Activated naive CD4-positive, alpha-beta T cell treated with anti-CD3 and anti-CD28 coated beads for 36 hours (primary cell): ENCODE measurements at regions of chr7 and their contacts with region 1.

Region 1: DNA sequence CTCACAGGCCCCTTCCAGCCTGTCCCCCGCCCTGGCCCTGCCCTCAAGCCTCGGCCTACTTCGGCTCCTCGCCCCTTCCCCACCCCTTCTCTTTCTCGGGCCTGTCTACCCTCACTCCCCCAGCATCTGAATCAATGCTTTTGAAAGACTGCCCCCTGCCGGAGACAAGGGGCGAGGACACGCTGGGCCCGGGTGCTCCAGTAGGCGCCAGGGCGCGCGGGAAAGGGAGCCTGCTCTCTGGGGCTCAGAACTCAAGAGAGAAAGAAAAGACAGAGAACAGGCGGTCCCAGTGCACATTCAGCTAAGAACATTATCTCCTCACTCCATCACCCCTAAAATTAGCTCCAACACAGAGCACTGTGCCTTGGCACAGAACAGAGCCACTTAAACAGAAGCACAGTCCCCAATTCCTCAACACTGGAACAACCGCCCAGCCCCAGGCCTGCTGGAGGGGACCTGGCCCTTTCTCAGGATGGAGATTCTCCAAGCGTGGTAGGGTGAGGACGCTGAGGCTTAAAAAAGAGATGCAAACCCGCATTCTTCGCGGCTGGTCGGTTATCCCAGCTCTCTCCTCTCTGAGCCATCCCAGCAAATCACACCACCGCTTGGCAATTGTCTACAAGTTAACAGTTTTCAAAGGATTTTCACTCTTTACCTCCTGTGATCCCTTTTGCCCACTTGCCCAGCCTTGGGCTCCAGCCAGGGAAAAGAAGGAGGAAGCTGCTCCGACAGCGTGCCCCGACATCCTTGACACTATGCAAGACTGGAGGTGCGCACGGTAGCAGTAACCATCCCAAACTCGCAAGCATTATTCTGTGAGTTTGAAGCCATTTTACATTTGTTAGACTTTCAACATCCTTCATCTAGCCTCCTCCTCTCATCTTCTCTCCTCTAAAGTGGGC is 2.1 kb downstream of the GIGYF1 start:
- DNase-seq: peak; percentile 91
- H3K4me3 Mint-ChIP-seq: peak overlapping the region; percentile 98
- H3K27ac Mint-ChIP-seq: no peak overlapping the region
- H3K4me1 Mint-ChIP-seq: peaks cover 53% of the 10 kb centered on the region
- H3K27me3 Mint-ChIP-seq: no peaks in the 10 kb centered on the region

Region 2: DNA sequence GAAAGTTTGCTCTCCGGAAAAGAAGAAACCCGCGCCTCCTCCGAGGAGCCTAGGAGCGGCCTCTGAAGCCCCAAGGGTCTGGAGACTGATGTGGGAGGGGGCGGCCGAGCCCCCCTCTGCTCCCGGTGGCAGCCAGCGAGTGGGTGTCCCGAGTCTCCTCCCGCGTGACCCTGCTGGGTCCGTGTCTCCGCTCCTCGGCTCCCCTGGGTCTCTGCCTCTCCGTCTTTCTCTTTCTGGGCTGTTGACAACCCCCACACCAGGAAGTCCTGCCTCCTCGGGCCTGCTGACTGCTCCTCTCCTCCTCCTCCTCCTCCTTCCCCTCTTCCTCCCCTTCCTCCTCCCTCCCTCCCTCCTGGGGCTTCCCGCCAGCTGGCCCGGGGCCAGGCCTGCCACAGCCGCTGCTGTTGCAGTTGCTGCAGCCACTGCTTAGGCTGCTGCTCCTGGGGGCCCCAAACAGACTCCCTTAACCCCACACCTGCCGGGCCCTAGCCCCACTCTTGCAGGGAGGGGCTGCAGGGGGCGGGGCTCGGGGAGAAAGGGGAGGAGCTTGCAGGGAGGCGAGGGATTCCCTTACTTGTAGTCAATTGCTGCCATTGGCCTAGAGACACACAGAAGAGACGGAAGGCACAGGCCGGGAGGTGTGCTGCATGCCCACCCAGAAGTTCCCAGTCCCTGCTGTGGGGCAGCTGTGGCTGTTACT is 212.8 kb before region 1 on chr7 and contains the start of gene TSC22D4:
- CTCF ChIA-PET with region 1: interaction called, 7 read pairs
- intact Hi-C with region 1: loop called (anchors 5 kb)
- DNase-seq: peak; percentile 93
- H3K4me3 Mint-ChIP-seq: peak within 1 kb of the TSS; percentile 98
- H3K27ac Mint-ChIP-seq: peak within 1 kb of the TSS; percentile 92
- H3K4me1 Mint-ChIP-seq: peaks cover 42% of the 10 kb centered on the region
- H3K27me3 Mint-ChIP-seq: no peaks in the 10 kb centered on the region
- total RNA-seq, gene TSC22D4: 46.0 to 48.7 TPM

Region 3: DNA sequence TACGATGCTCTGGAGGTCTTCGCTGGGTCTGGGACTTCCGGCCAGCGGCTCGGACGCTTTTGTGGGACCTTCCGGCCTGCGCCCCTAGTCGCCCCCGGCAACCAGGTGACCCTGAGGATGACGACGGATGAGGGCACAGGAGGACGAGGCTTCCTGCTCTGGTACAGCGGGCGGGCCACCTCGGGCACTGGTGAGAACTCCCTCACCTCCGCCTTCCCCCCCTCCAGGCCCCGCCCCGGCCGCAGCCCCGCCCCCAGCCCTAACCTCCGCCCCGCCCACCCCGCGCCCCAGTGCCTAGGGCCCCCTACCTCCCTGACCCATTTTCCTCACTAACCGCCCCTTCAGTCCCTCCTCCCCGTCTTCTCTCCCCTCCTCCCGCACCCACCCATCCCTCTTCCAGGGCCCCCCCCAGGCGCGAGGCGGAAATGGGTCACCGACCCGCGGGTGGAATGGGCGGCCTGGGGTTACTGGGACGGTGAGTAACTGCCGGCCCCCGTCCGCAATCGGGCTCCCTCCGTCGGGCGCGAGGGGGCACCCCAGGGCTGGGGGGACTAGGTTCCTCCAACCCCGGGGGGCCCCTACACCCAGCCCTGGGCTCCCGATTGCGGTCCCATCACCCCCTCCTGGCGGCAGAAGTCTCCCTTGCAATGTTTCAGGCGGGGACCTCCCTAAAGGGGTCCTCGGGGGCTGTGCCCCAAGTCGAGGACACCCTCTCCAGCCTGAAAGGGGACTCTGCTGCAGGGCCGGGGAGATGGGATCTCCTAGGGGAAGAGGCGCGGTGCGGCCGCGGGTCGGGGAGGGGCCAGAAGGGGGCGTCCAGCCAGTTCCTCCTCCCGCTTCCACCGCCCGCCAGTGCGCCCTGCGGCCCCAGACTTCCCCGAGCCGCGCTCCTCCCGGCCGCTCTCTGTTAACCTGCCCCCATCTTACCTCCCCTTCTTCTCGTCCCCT is 87.6 kb before region 1 on chr7:
- CTCF ChIA-PET with region 1: interaction called, 8 read pairs
- intact Hi-C with region 1: loop called (anchors 1 kb)
- DNase-seq: peak; percentile 77
- H3K4me3 Mint-ChIP-seq: peak overlapping the region; percentile 75
- H3K27ac Mint-ChIP-seq: peak overlapping the region; percentile 67
- H3K4me1 Mint-ChIP-seq: peaks cover 12% of the 10 kb centered on the region
- H3K27me3 Mint-ChIP-seq: no peaks in the 10 kb centered on the region

Region 4: GRCh38 chr7:100626530-100627237 is 65.2 kb before region 1 on chr7:
- CTCF ChIA-PET with region 1: interaction called, 16 read pairs
- intact Hi-C with region 1: no loop called
- DNase-seq: peak; percentile 91
- H3K4me3 Mint-ChIP-seq: peak overlapping the region; percentile 66
- H3K27ac Mint-ChIP-seq: peak overlapping the region; percentile 24
- H3K4me1 Mint-ChIP-seq: peaks cover 24% of the 10 kb centered on the region
- H3K27me3 Mint-ChIP-seq: no peaks in the 10 kb centered on the region

Region 5: GRCh38 chr7:100673300-100673941 is 18.5 kb before region 1 on chr7 and contains the start of gene GNB2:
- CTCF ChIA-PET with region 1: interaction called, 43 read pairs
- intact Hi-C with region 1: loop called (anchors 1 kb)
- DNase-seq: peak; percentile 100
- H3K4me3 Mint-ChIP-seq: peak within 1 kb of the TSS; percentile 97
- H3K27ac Mint-ChIP-seq: peak within 1 kb of the TSS; percentile 95
- H3K4me1 Mint-ChIP-seq: peaks cover 17% of the 10 kb centered on the region
- H3K27me3 Mint-ChIP-seq: no peaks in the 10 kb centered on the region
- total RNA-seq, gene GNB2: 221 TPM

Region 6: DNA sequence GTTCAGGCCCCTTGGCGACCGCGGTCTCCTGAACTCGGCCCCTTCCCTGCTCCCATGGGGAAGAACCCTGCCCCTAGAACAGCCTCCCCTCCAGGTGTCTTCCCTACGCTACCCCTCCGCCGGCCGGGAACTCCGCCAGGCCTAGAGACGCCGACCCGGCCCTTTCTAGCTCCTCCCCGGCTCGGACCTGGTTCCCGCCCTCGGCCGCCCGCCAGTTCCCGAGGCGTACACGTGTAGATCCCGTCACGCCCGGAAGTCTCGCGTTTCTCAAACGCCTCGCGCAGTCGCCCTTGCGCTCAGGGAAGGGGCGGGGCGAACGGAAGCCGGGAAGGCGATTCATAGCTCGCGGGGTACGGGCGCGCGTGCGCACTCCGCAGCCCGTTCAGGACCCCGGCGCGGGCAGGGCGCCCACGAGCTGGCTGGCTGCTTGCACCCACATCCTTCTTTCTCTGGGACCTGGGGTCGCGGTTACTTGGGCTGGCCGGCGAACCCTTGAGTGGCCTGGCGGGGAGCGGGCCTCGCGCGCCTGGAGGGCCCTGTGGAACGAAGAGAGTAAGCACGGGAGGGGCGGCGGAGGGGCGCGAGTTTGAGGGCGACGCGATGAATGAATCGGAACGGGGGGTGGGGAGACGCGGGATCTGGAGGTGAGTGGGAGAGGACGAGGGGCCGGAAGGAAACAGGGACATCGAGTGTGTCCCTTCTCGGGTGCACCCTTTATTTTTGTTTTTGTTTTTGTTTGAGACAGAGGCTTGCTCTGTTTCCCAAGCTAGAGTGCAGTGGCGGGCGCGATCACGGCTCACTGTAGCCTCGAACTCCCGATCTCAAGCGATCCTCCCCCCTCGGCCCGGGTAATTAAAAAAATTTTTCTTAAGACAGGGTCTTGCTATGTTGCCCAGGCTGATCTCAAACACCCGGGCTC is 14.1 kb after region 1 on chr7 and contains the start of gene POP7:
- CTCF ChIA-PET with region 1: interaction called, 122 read pairs
- intact Hi-C with region 1: loop called (anchors 1 kb)
- DNase-seq: peak; percentile 99
- H3K4me3 Mint-ChIP-seq: peak within 1 kb of the TSS; percentile 96
- H3K27ac Mint-ChIP-seq: peak within 1 kb of the TSS; percentile 89
- H3K4me1 Mint-ChIP-seq: peaks cover 15% of the 10 kb centered on the region
- H3K27me3 Mint-ChIP-seq: peaks cover 4% of the 10 kb centered on the region
- total RNA-seq, gene POP7: 23.2 to 29.6 TPM